H1 (cell line): ENCODE measurements at regions of chr20 and their contacts with region 1.

Region 1: GRCh38 chr20:63253438-63254236 is 626 bp downstream of the NKAIN4 start:
- DNase-seq: peak in 1 of 2 experiments; percentile 82
- H3K4me3 ChIP-seq: peak overlapping the region; percentile 36 to 67 (median 54)
- H3K27ac ChIP-seq: no peak overlapping the region
- H3K4me1 ChIP-seq: peaks cover 2 to 18% (median 15%) of the 10 kb centered on the region in 4 experiments
- H3K27me3 ChIP-seq: peaks cover 4 to 51% (median 40%) of the 10 kb centered on the region in 4 experiments
- CTCF ChIP-seq: no peak
- EP300 ChIP-seq: no peak
- POLR2A ChIP-seq: no peak
- RAD21 ChIP-seq: no peak; a peak in 1 of 4 replicates

Region 2: GRCh38 chr20:63178889-63179686 is 74.5 kb before region 1 on chr20:
- CTCF ChIA-PET with region 1: interaction called, 22 read pairs
- POLR2A ChIA-PET with region 1: no interaction called
- DNase-seq: peak in 1 of 2 experiments; percentile 77
- H3K4me3 ChIP-seq: peak overlapping the region; percentile 29 to 83 (median 34); a peak in 7 of 8 replicates
- H3K27ac ChIP-seq: no peak overlapping the region
- H3K4me1 ChIP-seq: peaks cover 3 to 45% (median 25%) of the 10 kb centered on the region in 4 experiments
- H3K27me3 ChIP-seq: peaks cover 32 to 45% (median 40%) of the 10 kb centered on the region in 4 experiments
- CTCF ChIP-seq: peak in 2 of 3 experiments; percentile 21 to 40; a peak in 3 of 4 replicates
- EP300 ChIP-seq: no peak
- POLR2A ChIP-seq: no peak
- RAD21 ChIP-seq: peak in 1 of 2 experiments; percentile 37; a peak in 2 of 4 replicates

Region 3: DNA sequence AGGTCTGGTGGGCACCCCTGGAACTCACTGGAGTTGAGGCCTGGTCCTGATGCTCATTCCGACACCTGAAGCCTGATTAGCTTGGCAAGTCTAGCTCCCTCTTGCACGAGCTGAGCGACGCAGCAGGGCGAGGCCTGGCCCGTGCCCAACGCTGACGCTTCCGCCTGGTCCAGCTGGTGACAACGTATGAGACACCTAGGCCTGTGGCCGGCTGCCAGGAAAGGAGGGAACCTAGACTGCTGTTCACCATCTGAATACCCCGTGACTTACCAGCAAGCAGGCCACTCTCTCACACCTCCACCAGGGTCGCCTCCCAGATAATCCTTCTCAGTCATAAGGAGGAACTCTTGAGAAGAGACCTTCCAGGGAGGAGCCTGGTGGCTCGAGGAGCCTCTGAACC is 62.2 kb before region 1 on chr20:
- CTCF ChIA-PET with region 1: no interaction called
- POLR2A ChIA-PET with region 1: no interaction called
- DNase-seq: no peak
- H3K4me3 ChIP-seq: no peak overlapping the region
- H3K27ac ChIP-seq: no peak overlapping the region; the same call in 1 of the 2 replicates
- H3K4me1 ChIP-seq: no peaks in the 10 kb centered on the region
- H3K27me3 ChIP-seq: no peaks in the 10 kb centered on the region; a peak in 2 of 7 replicates
- CTCF ChIP-seq: no peak
- EP300 ChIP-seq: no peak
- POLR2A ChIP-seq: no peak
- RAD21 ChIP-seq: no peak

Region 4: GRCh38 chr20:63216041-63216848 is 37.4 kb before region 1 on chr20 and contains the start of gene YTHDF1:
- CTCF ChIA-PET with region 1: interaction called, 3 read pairs
- POLR2A ChIA-PET with region 1: interaction called, 12 read pairs
- DNase-seq: peak; percentile 70 to 96
- H3K4me3 ChIP-seq: peak within 1 kb of the TSS; percentile 69 to 92 (median 81)
- H3K27ac ChIP-seq: peak within 1 kb of the TSS; percentile 49; the same call in 1 of the 2 replicates
- H3K4me1 ChIP-seq: peaks cover 0 to 11% (median 2%) of the 10 kb centered on the region in 4 experiments; a peak in 4 of 7 replicates
- H3K27me3 ChIP-seq: peaks cover 0 to 3% (median 0%) of the 10 kb centered on the region in 4 experiments; a peak in 1 of 7 replicates
- CTCF ChIP-seq: no peak
- EP300 ChIP-seq: 0 out of 3 replicates have a peak, but pooled peaks of 1 of the 2 experiments have one; percentile 10
- POLR2A ChIP-seq: peak in 1 of 2 experiments; percentile 51; a peak in 1 of 3 replicates
- RAD21 ChIP-seq: no peak
- total RNA-seq, gene YTHDF1: 66.0 and 66.1 TPM in 2 replicates

Region 5: DNA sequence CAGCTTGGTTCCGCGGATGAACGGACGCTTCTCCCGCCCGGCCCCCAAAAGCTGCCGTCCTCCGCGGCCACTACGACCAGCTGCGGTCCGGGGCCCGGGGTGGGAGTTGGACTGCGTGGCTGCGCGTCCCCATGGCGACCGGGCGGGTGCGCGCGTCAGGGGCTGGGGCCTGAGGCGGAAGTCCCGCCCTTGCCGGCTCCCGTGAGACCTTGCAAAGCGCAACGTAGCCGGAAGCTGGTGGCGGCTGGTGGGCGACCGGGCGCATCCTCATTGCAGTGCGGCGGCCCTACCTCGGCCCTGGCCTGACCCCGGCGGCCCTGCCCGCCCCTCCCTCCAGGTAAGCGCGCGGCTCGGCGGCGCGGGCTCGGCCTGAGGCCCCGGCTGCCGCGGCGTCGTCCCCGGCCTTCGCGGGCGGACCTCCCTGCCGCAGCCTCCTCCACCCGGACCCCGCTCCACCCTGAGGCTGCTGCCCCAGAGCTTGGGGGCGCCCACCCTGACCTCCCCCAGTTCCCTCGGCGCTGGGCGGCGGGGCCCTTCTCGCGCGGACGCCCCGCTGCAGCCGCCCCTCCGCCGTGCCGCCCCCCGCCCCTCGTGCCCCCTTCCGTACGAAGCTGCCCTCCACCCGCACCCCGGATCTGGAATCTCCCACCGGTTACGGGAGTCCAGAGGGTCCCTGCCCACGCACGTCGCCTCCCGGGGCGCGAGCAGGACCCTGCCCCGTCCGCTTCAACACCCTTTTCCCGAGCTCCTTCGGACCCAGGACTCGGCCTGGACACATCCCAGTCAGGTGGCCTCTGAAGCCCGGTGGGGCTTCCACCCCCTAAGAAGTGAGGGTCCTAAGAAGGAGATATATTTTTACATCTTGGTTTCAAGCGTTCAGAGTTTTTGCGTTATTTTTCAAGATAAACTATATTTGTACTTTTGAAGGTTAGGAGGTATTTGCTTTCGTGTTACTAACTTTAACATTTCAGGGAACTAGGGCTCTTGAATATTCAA is 19.2 kb after region 1 on chr20 and contains the start of gene ARFGAP1:
- CTCF ChIA-PET with region 1: interaction called, 5 read pairs
- POLR2A ChIA-PET with region 1: interaction called, 12 read pairs
- DNase-seq: peak in 1 of 2 experiments; percentile 93
- H3K4me3 ChIP-seq: peak within 1 kb of the TSS; percentile 66 to 95 (median 87)
- H3K27ac ChIP-seq: no peak within 1 kb of the TSS; the same call in 1 of the 2 replicates
- H3K4me1 ChIP-seq: peaks cover 0 to 7% (median 1%) of the 10 kb centered on the region in 4 experiments; a peak in 5 of 7 replicates
- H3K27me3 ChIP-seq: 0 out of 7 replicates have a peak, but pooled peaks cover 0 to 2% (median 0%) of the 10 kb centered on the region in 4 experiments
- CTCF ChIP-seq: no peak
- EP300 ChIP-seq: no peak
- POLR2A ChIP-seq: peak in 1 of 2 experiments; percentile 79; a peak in 2 of 3 replicates
- RAD21 ChIP-seq: no peak
- total RNA-seq, gene ARFGAP1: 93.0 and 100 TPM in 2 replicates

Region 6: DNA sequence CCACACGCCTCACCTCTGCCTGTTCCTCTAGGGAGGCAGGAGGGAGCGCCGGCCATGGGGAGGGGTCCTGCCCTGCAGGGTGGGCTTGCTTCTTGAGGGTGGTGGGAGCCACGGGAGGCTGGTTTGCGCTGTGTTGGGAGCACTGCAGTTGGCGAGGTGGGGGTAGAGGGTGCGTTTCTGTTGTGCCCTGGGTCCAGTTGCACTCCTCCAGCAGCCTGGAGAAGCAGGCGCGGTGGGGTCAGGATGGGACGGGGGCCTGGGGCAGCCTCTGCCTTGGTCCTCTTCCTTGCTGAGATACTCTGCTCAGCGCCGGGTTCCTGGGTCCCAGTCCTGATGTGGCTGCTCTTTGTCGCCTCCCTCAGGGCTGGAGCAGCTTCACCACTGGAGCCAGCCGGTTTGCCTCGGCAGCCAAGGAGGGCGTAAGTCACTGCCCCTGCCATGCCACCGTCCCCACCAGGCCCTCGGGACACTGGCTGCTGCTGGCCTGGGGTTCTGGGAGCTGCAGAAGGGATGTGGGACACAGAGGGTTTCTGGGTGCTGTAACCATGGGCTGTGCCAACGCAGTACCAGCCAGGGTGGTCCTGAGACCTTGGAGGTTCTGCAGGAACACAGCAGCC is 27.4 kb after region 1 on chr20:
- CTCF ChIA-PET with region 1: interaction called, 19 read pairs
- POLR2A ChIA-PET with region 1: no interaction called
- DNase-seq: no peak
- H3K4me3 ChIP-seq: no peak overlapping the region
- H3K27ac ChIP-seq: no peak overlapping the region
- H3K4me1 ChIP-seq: no peaks in the 10 kb centered on the region
- H3K27me3 ChIP-seq: no peaks in the 10 kb centered on the region
- CTCF ChIP-seq: peak; percentile 74 to 84 (median 83)
- EP300 ChIP-seq: no peak
- POLR2A ChIP-seq: no peak
- RAD21 ChIP-seq: peak; percentile 51 to 63

Region 7: DNA sequence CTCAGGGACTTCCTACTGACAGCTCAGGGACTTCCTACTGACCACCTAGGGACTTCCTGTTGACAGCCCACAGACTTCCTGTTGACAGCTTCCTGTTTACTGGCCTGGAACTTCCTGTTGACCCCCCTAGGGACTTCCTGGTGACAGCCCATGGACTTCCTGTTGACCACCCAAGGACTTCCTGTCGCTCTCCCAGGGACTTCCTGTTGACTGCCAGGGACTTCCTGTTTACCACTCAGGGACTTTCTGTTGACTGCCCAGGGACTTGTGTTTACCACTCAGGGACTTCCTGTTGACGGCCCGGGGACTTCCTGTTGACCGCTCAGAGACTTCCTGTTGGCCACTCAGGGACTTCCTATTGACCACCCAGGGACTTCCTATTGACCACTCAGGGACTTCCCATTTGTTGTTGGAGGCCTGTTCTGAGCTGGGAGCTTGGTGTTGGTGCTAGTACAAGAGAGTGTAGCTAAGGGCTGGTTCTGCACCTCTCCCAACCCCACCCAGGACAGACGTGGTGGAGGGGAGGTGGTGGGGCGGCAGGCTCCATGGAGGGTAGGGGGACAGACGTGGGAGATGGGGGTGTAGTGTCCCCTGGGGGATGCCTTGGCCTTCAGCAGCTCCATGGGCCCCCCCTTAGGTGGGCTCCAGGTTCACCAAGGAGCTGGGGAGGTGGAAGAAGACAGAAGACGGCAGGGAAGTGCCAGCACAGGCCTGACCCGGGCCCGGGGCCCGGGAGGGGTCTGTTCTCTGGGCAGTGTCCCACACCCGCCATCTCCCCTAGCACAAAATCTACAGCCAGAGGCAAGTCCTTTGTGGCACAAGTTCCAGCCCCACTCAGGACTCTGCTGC is 73.5 kb after region 1 on chr20:
- CTCF ChIA-PET with region 1: no interaction called
- POLR2A ChIA-PET with region 1: no interaction called
- DNase-seq: no peak
- H3K4me3 ChIP-seq: no peak overlapping the region
- H3K27ac ChIP-seq: no peak overlapping the region
- H3K4me1 ChIP-seq: peaks cover 0 to 5% (median 1%) of the 10 kb centered on the region in 4 experiments; a peak in 3 of 7 replicates
- H3K27me3 ChIP-seq: no peaks in the 10 kb centered on the region
- CTCF ChIP-seq: no peak
- EP300 ChIP-seq: no peak
- POLR2A ChIP-seq: no peak
- RAD21 ChIP-seq: no peak

Region 8: GRCh38 chr20:63537016-63537524 is 283.4 kb after region 1 on chr20 and contains the start of gene PTK6:
- CTCF ChIA-PET with region 1: no interaction called
- POLR2A ChIA-PET with region 1: no interaction called
- DNase-seq: no peak
- H3K4me3 ChIP-seq: peak within 1 kb of the TSS in 3 of 4 experiments; percentile 24 to 48 (median 25); a peak in 4 of 8 replicates
- H3K27ac ChIP-seq: no peak within 1 kb of the TSS
- H3K4me1 ChIP-seq: peaks cover 0 to 23% (median 3%) of the 10 kb centered on the region in 4 experiments; a peak in 5 of 7 replicates
- H3K27me3 ChIP-seq: no peaks in the 10 kb centered on the region
- CTCF ChIP-seq: no peak
- EP300 ChIP-seq: no peak
- POLR2A ChIP-seq: no peak
- RAD21 ChIP-seq: no peak
- total RNA-seq, gene PTK6: 0.17 and 0.19 TPM in 2 replicates

Region 9: DNA sequence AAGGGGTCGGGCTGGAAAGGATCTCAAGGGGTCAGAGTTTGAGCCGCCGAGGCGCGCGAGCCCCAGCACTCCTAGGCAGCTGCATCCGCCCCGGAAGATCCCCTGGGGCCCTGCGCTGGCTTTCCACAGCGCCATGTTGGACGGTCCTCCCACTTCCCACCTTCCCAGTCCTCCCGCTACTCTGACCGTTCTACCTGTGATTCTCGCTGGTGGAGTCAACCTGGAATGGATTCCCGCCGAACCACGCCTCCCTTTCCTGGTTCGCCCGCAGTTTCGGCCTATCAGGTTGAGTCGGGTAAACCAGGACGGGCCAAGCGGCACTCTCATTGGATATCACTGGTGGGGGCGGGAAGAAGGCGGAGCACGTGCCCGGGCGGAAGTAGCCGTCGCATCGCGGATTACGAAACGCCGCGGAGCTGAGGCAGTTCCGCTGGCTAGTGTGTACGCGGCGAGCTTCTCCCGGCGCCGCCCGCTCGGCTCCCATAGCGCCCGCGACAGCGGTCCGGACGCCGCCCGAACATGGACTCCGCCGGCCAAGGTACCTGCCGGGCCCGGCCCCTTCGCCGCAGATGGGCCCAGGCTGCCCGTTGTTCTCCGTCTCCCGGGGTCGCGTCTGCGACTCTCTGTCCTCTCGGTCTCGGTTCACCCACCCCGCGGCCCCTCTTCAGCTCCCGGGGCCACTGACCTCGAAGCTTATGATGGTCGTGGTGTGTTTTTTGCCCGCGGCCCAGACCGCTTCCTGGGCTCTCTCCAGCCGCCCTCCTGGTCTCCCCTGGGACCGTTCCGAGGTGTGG is 611.4 kb after region 1 on chr20 and contains the start of gene TPD52L2:
- CTCF ChIA-PET with region 1: no interaction called
- POLR2A ChIA-PET with region 1: no interaction called
- DNase-seq: peak; percentile 96 to 98
- H3K4me3 ChIP-seq: peak within 1 kb of the TSS; percentile 82 to 95 (median 92)
- H3K27ac ChIP-seq: peak within 1 kb of the TSS; percentile 69; the same call in 1 of the 2 replicates
- H3K4me1 ChIP-seq: peaks cover 0 to 9% (median 4%) of the 10 kb centered on the region in 4 experiments; a peak in 5 of 7 replicates
- H3K27me3 ChIP-seq: no peaks in the 10 kb centered on the region
- CTCF ChIP-seq: no peak
- EP300 ChIP-seq: no peak
- POLR2A ChIP-seq: peak; percentile 91 to 97
- RAD21 ChIP-seq: no peak
- total RNA-seq, gene TPD52L2: 77.1 and 78.1 TPM in 2 replicates